MCF 10A (cell line): ENCODE measurements at regions of chr18 and their contacts with region 1.

Region 1: DNA sequence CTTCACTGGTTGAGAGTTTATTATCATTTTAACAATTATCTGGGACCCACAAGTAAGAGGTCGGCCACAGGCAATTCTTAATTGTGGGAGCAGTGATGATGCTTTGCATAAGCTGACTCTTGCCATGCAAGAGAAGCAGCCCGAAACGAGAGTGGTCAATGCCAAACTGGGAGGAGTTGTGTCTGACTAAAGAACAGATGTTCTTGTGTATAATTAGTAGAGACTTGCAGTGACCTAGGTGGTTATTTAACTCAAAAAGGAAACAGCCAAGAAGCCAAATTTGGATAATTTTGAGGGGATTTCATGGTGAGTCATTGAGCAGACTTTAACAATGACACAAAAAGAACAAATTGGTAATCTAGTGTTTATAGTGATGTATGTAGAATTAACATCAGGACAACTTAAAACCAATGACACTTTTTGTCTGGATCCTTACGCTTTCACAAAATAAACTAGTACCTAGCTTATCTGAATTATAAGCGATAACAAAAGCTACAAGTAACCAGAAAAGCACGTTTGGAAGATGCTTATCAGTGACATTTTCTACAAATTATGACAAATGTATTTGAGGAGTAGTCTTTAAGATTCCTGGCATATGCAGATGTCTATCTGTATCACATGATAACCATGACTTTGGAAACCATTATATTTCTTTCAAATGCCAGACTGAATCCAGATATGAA is 184.7 kb upstream of the DLGAP1 start:
- DNase-seq: no peak
- H3K4me3 Mint-ChIP-seq: no peak overlapping the region
- H3K27ac Mint-ChIP-seq: no peak overlapping the region
- H3K4me1 Mint-ChIP-seq: peaks cover 10% of the 10 kb centered on the region
- H3K27me3 Mint-ChIP-seq: no peaks in the 10 kb centered on the region
- CTCF ChIP-seq: no peak

Region 2: DNA sequence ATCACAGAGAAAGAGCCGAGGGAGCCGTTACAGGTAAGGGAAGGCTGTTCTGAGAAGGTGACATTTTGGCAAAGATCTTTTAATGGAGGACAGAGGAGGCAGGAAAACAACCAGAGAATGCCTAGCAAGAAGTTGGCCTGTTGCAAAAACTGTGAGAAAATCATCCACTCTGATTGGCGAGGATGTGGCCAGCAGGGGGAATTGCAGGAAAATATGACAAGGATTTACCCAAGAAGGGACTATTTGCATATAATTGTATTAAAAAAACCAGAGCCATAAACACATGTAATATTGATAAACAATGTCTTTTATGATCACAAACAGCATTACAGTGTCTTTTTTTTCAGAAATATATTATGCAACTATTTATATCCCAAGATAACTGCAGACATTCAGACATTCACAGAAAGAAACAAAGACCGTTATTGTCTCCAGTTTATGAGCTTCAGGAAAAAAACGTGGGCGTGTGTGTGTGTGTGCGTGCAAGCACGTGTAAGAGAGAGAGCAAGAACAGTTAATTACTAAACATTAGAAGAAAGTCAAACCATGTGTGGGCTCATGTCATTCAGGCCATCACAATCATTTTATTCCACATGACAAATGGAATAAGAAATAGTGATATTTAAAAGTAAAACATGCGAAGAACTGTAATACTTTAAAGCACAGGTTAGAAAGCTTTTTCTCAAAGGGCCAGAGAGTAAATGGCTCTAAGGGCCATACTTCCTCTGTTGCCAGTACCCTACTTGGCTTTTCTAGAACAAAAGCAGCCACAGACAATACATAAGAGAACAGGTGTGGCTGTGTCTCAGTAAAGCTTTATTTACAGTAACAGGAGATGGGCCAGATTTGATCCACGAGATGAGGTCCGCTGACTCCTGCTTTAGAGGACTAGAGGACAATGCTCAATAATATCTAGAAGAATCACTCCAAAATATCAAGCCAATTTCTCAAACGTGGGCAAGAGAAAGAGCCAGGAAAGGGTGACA is 508.7 kb before region 1 on chr18:
- CTCF ChIA-PET with region 1: no interaction called
- POLR2A ChIA-PET with region 1: no interaction called
- intact Hi-C with region 1: no loop called
- DNase-seq: no peak
- H3K4me3 Mint-ChIP-seq: no peak overlapping the region
- H3K27ac Mint-ChIP-seq: no peak overlapping the region
- H3K4me1 Mint-ChIP-seq: no peaks in the 10 kb centered on the region
- H3K27me3 Mint-ChIP-seq: peaks cover 85% of the 10 kb centered on the region
- CTCF ChIP-seq: no peak

Region 3: GRCh38 chr18:4704781-4705180 is 65.0 kb after region 1 on chr18:
- CTCF ChIA-PET with region 1: no interaction called
- POLR2A ChIA-PET with region 1: no interaction called
- intact Hi-C with region 1: loop called (anchors 10 kb)
- DNase-seq: no peak
- H3K4me3 Mint-ChIP-seq: no peak overlapping the region
- H3K27ac Mint-ChIP-seq: no peak overlapping the region
- H3K4me1 Mint-ChIP-seq: peaks cover 10% of the 10 kb centered on the region
- H3K27me3 Mint-ChIP-seq: no peaks in the 10 kb centered on the region
- CTCF ChIP-seq: no peak